Right ventricle myocardium inferior (tissue), 1 donor: ENCODE measurements at regions of chr10 and their contacts with region 1.

Region 1: GRCh38 chr10:114304017-114304570 is 65.0 kb downstream of the VWA2 start:
- DNase-seq: no peak
- ATAC-seq: peak; percentile 84

Region 2: DNA sequence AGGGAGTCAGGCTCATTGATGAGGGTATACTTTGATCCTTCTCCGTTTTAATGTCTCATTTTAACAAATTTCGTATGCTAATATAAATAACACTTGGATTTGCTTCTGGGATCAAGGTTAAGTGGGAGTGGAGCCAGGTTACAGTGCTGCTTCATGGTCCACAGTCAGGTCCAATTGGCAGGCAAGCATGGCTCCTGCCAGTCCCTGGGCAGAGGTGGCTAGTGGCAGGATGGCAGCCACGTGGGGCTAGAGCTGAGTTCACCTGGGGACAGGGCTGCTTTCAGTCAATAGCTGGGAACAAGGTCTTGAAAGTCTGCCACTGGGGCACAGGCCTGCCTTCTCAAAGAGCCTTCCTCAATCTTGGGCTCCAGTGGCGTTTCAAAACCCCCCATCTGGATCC is 81.0 kb before region 1 on chr10:
- intact Hi-C with region 1: no loop called
- DNase-seq: no peak
- ATAC-seq: peak; percentile 92

Region 3: GRCh38 chr10:114429581-114430335 is 125.7 kb after region 1 on chr10:
- intact Hi-C with region 1: loop called (anchors 2 kb)
- DNase-seq: no peak
- ATAC-seq: no peak

Region 4: GRCh38 chr10:114541081-114541796 is 237.1 kb after region 1 on chr10:
- intact Hi-C with region 1: loop called (anchors 5 kb)
- DNase-seq: peak; percentile 82
- ATAC-seq: peak; percentile 95

Region 5: DNA sequence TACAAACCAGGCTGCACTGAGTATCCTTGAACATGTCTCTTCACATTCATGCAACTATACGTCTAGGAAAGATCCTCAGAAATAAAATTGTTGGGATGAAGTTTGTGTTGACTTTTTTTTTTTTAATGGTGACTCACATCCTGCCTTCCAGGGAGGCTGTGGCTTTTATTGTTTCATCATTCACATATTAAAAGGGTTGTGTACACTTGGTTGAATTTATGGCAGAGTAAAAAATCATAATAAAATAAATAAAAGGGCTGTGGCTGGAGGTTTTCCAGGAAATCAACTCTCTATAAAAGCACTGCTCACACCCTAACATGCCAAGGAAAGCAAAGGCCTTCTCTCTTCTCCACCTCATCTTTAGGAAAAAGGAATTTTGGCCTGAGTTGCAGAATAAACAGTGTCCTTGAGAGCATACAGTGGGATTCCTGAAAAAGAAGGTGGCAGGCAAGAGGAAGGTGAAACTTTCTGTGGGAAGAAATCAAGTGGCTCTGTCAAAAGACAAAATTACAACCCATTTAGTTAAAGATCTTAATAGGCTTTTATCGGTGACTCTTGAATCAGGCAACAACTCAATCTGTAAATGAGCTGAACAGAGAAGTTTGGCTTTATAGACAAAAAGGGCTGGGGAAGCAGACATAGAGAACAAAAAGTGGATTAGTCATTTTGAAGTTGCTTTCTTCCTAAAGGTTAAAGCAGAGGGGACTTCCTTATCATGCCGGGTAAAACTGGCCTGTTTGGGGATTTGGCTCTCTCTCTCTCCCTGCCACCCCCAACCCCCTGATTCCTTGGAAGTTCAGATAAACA is 475.9 kb after region 1 on chr10:
- intact Hi-C with region 1: loop called (anchors 10 kb)
- DNase-seq: no peak
- ATAC-seq: no peak

Region 6: GRCh38 chr10:114821293-114821914 is 517.3 kb after region 1 on chr10 and contains the start of gene FHIP2A:
- intact Hi-C with region 1: loop called (anchors 10 kb)
- DNase-seq: peak; percentile 93
- ATAC-seq: peak; percentile 94
- total RNA-seq, gene FHIP2A: 25.2 TPM